H1 (cell line): ENCODE measurements at regions of chr1 and their contacts with region 1.

Region 1: DNA sequence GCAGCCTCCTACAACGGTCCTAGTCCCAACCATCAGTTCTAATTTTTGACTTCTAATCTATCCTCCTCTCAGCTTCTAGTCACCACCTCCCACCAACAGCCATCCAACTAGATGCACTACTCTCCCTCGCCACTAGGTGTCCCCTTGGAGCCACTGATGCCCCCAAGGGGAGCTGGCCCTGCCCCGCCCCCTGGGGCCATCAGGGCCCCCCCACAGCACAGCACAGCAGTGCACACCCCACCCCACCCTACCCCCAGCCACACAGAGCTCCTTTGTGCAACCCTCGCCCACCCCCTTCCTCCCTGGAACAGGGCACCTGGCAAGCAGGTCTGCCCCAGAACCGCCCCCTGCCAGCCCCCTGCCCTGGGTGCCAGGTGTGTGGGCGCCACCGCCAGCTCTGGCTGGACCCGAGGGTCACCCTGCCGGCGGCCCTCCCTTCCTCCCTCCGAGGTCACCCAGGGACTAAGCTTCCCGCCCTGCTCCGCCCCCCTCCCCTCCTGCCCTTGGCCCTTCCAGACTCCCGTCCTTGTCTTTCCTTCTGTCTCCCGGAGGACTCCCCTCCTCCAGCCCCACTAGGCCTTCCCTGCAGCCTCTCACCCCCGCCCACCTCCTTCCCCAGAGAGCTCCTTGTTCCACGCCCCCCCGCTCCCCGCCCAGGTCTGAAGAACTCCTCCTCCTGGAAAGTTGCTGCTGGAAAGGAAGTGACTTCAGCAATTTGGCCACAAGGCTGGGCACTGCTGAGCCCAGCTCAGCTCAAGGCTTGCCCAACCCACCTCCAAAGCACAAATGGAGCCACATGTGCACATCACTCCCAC is 47.0 kb downstream of the AHDC1 start:
- DNase-seq: peak; percentile 87 to 88
- H3K4me3 ChIP-seq: peak overlapping the region in 2 of 4 experiments; percentile 1 to 42; a peak in 2 of 8 replicates
- H3K27ac ChIP-seq: no peak overlapping the region
- H3K4me1 ChIP-seq: peaks cover 13 to 42% (median 19%) of the 10 kb centered on the region in 4 experiments
- H3K27me3 ChIP-seq: no peaks in the 10 kb centered on the region; a peak in 1 of 7 replicates
- CTCF ChIP-seq: peak in 2 of 3 experiments; percentile 69 to 75; a peak in 3 of 4 replicates
- EP300 ChIP-seq: no peak
- POLR2A ChIP-seq: no peak
- RAD21 ChIP-seq: peak; percentile 73 to 79

Region 2: DNA sequence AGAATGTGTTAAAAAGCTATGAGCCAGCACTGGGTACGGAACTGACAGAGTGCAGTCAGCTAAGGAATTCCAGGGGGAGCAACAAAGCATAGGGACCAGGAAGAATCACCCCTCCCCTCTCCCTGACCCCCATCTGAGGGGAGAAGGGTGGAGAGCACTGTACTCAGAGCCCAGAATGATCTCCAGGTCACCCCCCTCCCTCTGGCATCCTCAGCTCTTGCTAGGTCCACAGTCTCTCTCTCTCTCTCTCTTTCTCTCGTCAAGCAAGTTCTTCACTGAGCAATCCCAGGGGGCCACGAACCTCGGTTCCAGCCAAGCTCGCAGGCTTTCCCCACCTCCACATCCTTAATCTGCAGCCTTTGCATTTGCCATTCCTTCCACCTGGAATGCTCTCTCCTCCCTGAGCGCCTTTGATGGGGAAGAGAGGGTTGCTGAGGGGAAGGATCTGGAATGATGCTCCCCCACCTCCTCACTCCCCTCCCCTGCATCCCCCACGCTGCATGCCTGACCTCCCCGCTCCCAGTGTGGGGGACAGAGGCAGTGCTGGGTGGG is 60.3 kb before region 1 on chr1:
- CTCF ChIA-PET with region 1: interaction called, 21 read pairs
- POLR2A ChIA-PET with region 1: no interaction called
- DNase-seq: peak in 1 of 2 experiments; percentile 76
- H3K4me3 ChIP-seq: peak overlapping the region in 2 of 4 experiments; percentile 7 to 36; a peak in 3 of 8 replicates
- H3K27ac ChIP-seq: peak overlapping the region; percentile 59; the same call in 1 of the 2 replicates
- H3K4me1 ChIP-seq: peaks cover 3 to 11% (median 6%) of the 10 kb centered on the region in 4 experiments; a peak in 6 of 7 replicates
- H3K27me3 ChIP-seq: no peaks in the 10 kb centered on the region
- CTCF ChIP-seq: peak; percentile 51 to 83 (median 69)
- EP300 ChIP-seq: peak in 1 of 2 experiments; percentile 69; a peak in 1 of 3 replicates
- POLR2A ChIP-seq: no peak
- RAD21 ChIP-seq: peak; percentile 61 to 62

Region 3: GRCh38 chr1:27513958-27514357 is 43.0 kb before region 1 on chr1:
- CTCF ChIA-PET with region 1: interaction called, 103 read pairs
- POLR2A ChIA-PET with region 1: interaction called, 7 read pairs
- DNase-seq: no peak
- H3K4me3 ChIP-seq: no peak overlapping the region
- H3K27ac ChIP-seq: no peak overlapping the region
- H3K4me1 ChIP-seq: peaks cover 0 to 11% (median 5%) of the 10 kb centered on the region in 4 experiments; a peak in 6 of 7 replicates
- H3K27me3 ChIP-seq: no peaks in the 10 kb centered on the region
- CTCF ChIP-seq: no peak
- EP300 ChIP-seq: no peak
- POLR2A ChIP-seq: no peak
- RAD21 ChIP-seq: no peak

Region 4: DNA sequence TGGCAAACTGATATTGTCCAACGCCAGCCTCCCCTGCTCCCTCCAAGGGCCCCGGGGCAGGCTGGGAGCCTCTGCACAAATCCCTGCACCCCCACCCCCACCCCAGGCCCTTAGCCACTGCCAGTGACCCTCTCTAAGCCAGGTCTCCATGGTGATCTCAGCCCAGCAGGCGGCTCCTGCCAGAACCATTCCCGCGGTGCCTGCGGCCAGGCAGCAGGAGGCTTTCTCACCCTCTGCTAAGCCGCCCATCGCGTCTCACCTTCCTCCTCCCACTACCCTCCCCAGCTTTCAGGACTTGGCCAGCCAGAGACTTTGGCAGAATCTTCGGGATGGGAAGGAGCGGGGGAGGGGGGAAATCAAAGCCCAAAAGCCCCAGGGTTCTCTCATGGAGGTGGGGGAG is 20.2 kb before region 1 on chr1:
- CTCF ChIA-PET with region 1: interaction called, 862 read pairs
- POLR2A ChIA-PET with region 1: interaction called, 34 read pairs
- DNase-seq: peak in 1 of 2 experiments; percentile 66
- H3K4me3 ChIP-seq: no peak overlapping the region
- H3K27ac ChIP-seq: peak overlapping the region; percentile 11; the same call in 1 of the 2 replicates
- H3K4me1 ChIP-seq: peaks cover 12 to 33% (median 23%) of the 10 kb centered on the region in 4 experiments
- H3K27me3 ChIP-seq: no peaks in the 10 kb centered on the region
- CTCF ChIP-seq: no peak
- EP300 ChIP-seq: no peak
- POLR2A ChIP-seq: no peak
- RAD21 ChIP-seq: peak in 1 of 2 experiments; percentile 15; a peak in 1 of 4 replicates

Region 5: DNA sequence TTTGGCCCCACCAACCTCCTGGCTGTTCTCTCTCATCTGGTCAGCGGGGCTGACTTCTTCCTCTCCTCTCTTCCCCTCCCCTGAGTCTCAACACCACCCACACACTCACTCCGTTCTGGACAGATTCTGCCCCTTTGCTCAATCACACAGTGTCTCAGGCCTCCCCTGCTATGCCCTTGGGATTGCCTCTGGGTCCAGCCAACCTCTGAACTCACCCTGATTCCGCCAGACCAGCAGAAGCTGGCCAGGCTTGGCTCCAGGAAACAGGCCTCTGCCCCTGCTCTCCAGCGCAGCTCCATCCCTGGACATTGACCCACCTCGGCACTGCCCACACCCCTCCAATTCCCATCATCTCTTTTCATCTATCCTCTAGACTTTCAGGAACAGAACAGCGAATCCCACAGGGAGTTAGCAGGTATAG is 24.8 kb after region 1 on chr1:
- CTCF ChIA-PET with region 1: interaction called, 862 read pairs
- POLR2A ChIA-PET with region 1: interaction called, 350 read pairs
- DNase-seq: no peak
- H3K4me3 ChIP-seq: no peak overlapping the region
- H3K27ac ChIP-seq: no peak overlapping the region
- H3K4me1 ChIP-seq: peaks cover 0 to 5% (median 1%) of the 10 kb centered on the region in 4 experiments; a peak in 6 of 7 replicates
- H3K27me3 ChIP-seq: no peaks in the 10 kb centered on the region
- CTCF ChIP-seq: no peak
- EP300 ChIP-seq: no peak
- POLR2A ChIP-seq: no peak
- RAD21 ChIP-seq: no peak

Region 6: GRCh38 chr1:27662707-27663393 is 105.9 kb after region 1 on chr1:
- CTCF ChIA-PET with region 1: interaction called, 41 read pairs
- POLR2A ChIA-PET with region 1: interaction called, 4 read pairs
- DNase-seq: peak; percentile 78 to 99
- H3K4me3 ChIP-seq: no peak overlapping the region
- H3K27ac ChIP-seq: 0 out of 2 replicates have a peak overlapping the region, but pooled peaks have one; percentile 5
- H3K4me1 ChIP-seq: peaks cover 4 to 20% (median 13%) of the 10 kb centered on the region in 4 experiments; a peak in 6 of 7 replicates
- H3K27me3 ChIP-seq: peaks cover 0 to 2% (median 0%) of the 10 kb centered on the region in 4 experiments; a peak in 2 of 7 replicates
- CTCF ChIP-seq: peak; percentile 74 to 91 (median 88)
- EP300 ChIP-seq: no peak
- POLR2A ChIP-seq: no peak
- RAD21 ChIP-seq: peak; percentile 94

Region 7: DNA sequence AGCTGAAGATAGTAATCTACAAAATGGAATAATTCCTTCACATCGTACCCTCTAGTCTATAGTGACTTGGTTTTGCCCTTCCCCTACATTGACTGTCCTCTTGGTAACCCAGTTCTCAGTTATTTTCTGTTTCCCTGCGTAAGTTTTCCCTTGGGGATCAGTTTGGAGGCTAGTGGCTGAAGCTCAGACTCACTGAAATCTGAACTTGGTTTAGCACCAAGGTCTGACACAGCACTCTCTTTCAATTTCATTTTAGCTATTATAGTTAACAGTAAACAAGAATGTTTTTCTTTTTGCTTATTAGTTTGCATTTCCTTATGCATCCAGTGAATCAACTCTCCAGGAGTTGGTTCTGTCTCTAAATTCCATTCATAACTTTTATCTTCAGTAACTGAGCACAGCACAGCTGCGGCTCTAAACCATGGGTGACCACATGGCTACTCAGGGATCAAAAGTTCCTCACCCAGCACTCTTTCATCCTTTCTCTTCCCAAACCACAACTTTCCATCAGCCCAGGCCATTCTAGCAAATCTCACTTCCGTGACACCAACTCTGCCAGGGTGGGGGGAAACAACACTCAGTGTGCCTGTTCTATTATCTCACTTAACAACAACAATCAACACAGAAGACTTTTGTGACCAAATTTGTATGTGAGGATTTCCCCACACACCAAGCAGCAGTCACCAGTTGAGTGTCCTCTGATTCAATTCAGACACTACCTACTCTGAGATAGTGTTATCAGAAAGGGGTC is 132.6 kb after region 1 on chr1:
- CTCF ChIA-PET with region 1: no interaction called
- POLR2A ChIA-PET with region 1: no interaction called
- DNase-seq: no peak
- H3K4me3 ChIP-seq: no peak overlapping the region
- H3K27ac ChIP-seq: no peak overlapping the region
- H3K4me1 ChIP-seq: peaks cover 4 to 11% (median 8%) of the 10 kb centered on the region in 4 experiments
- H3K27me3 ChIP-seq: no peaks in the 10 kb centered on the region
- CTCF ChIP-seq: no peak
- EP300 ChIP-seq: no peak
- POLR2A ChIP-seq: no peak
- RAD21 ChIP-seq: no peak

Region 8: DNA sequence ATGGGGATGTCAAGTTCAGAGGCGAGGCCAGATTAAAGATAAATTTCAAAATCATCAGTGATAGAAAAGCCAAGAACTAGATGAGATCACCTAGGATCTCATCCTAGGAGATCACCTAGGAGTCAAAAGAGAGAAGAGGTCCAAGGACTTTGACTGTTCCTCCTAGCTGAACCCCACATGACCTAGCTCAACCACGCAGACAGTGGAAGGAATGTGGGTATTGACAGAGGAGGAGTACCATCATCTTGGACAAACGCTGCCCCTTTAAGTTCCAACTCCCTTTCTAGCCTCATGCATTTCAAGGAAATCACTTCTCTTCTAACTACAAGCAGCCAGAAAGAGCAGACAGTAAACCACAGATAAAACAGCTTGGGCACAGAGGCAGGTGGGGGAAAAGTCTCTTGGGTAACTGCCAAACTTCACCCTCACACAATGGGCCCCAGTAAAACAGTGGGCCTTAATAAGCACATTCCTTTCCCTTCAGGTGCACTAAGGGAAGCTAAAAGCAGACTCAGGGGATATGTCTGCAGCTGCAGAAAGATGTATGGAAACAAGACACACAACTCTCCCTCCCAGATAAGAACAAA is 156.2 kb after region 1 on chr1:
- CTCF ChIA-PET with region 1: no interaction called
- POLR2A ChIA-PET with region 1: no interaction called
- DNase-seq: no peak
- H3K4me3 ChIP-seq: no peak overlapping the region
- H3K27ac ChIP-seq: no peak overlapping the region
- H3K4me1 ChIP-seq: peaks cover 0 to 6% (median 1%) of the 10 kb centered on the region in 4 experiments; a peak in 1 of 7 replicates
- H3K27me3 ChIP-seq: no peaks in the 10 kb centered on the region
- CTCF ChIP-seq: no peak
- EP300 ChIP-seq: no peak
- POLR2A ChIP-seq: no peak
- RAD21 ChIP-seq: no peak